HCT116 (cell line): ENCODE measurements at regions of chr1 and their contacts with region 1.

Region 1: GRCh38 chr1:212455803-212456528 is 23.2 kb downstream of the NENF start:
- DNase-seq: peak; percentile 67
- ATAC-seq: peak; percentile 90
- H3K4me3 ChIP-seq: no peak overlapping the region
- H3K27ac ChIP-seq: no peak overlapping the region
- H3K4me1 ChIP-seq: peaks cover 0 to 6% of the 10 kb centered on the region in 2 experiments; a peak in 1 of 4 replicates
- H3K27me3 ChIP-seq: no peaks in the 10 kb centered on the region
- CTCF ChIP-seq: peak; percentile 92 to 98 (median 95)
- POLR2A ChIP-seq: no peak
- RAD21 ChIP-seq: peak; percentile 99

Region 2: GRCh38 chr1:211698161-211699026 is 757.6 kb before region 1 on chr1:
- CTCF ChIA-PET with region 1: interaction called, 21 read pairs
- POLR2A ChIA-PET with region 1: no interaction called
- RAD21 ChIA-PET with region 1: no interaction called
- intact Hi-C with region 1: loop called (anchors 5 kb)
- DNase-seq: peak; percentile 69
- ATAC-seq: peak; percentile 98
- H3K4me3 ChIP-seq: 0 out of 4 replicates have a peak overlapping the region, but pooled peaks of 1 of the 2 experiments have one; percentile 11
- H3K27ac ChIP-seq: no peak overlapping the region
- H3K4me1 ChIP-seq: peaks cover 0 to 12% of the 10 kb centered on the region in 2 experiments; a peak in 2 of 4 replicates
- H3K27me3 ChIP-seq: no peaks in the 10 kb centered on the region
- CTCF ChIP-seq: peak; percentile 99
- POLR2A ChIP-seq: no peak
- RAD21 ChIP-seq: peak; percentile 99

Region 3: DNA sequence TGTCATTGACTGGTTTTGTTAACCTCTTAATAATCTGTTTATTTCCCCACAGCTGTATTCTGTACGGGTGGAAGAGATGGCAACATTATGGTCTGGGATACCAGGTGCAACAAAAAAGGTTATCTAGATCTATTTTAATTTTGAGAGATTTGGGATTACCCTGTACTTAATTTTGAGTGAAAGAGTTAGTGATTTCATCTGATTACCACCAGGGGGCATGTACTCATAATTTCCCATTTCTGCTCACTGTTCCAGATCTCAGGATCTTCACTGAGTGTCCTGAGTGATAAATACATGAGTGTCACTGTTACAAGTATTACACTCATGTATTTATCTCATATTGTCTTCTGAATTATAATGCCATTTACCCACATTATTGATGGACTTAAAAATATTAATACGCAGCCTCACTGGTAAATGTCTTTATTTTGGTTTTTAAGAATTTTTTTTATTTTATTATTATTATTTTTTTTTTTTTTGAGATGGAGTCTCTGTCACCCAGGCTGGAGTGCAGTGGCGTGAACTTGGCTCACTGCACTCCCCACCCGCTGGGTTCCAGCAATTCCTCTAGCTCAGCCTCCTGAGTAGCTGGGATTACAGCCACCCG is 393.0 kb before region 1 on chr1:
- CTCF ChIA-PET with region 1: interaction called, 34 read pairs
- POLR2A ChIA-PET with region 1: no interaction called
- RAD21 ChIA-PET with region 1: interaction called, 5 to 7 read pairs
- intact Hi-C with region 1: loop called (anchors 1 kb)
- DNase-seq: peak; percentile 22
- ATAC-seq: peak; percentile 83
- H3K4me3 ChIP-seq: no peak overlapping the region
- H3K27ac ChIP-seq: no peak overlapping the region
- H3K4me1 ChIP-seq: no peaks in the 10 kb centered on the region
- H3K27me3 ChIP-seq: no peaks in the 10 kb centered on the region
- CTCF ChIP-seq: peak; percentile 58 to 66 (median 60); a peak in 5 of 6 replicates
- POLR2A ChIP-seq: no peak
- RAD21 ChIP-seq: peak; percentile 65

Region 4: DNA sequence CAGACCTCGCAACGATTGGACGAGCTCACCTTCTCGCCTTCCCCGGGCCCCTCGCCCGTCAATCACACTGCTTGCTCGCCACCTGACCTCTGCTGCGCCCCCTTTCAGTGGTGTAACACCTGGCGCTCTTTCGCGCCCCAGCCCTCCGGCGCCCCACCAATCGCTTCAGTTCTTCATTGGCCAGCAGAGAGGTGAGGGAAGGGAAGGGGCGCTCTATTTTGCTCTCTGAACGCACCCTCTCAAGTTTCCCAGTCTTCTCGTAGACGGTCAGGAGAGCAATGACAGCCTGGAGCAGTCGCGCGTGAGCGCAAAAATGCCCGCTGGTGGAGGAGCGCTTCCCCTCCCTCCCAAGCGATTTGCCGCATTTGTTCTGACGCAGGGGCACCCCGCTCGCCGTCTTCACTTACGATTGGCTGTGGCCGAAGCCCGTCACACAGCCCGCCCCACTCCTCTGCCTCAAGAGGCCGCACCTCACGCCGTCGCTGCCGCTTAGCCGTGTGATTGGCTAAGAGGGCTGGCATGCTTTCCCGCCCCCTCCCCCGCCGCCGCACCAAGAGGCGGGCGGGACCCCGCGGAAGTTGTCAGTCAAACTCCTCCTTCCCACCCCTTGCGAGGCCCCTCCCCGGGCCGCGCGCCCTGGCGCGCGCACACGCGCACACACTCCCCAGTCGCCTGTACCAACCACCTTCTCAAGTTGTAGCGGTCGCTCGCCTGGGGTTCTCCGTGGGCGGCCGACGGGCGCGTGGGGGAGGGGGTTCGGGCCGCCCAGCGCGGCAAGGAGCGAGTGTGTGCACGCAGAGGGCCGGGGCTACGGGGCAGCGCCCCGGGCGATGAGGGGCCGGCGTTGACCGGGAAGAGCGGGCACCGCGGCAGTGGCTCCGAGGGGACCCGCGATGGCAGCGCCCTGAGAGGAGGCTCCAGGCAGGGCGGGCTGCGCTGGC is 171.0 kb before region 1 on chr1 and contains the start of gene PPP2R5A:
- CTCF ChIA-PET with region 1: interaction called, 5 read pairs
- POLR2A ChIA-PET with region 1: no interaction called
- RAD21 ChIA-PET with region 1: no interaction called
- intact Hi-C with region 1: loop called (anchors 10 kb)
- DNase-seq: peak; percentile 98
- ATAC-seq: peak; percentile 91
- H3K4me3 ChIP-seq: peak within 1 kb of the TSS; percentile 83 to 86
- H3K27ac ChIP-seq: peak within 1 kb of the TSS; percentile 95
- H3K4me1 ChIP-seq: peaks cover 24 to 28% of the 10 kb centered on the region in 2 experiments; a peak in 3 of 4 replicates
- H3K27me3 ChIP-seq: no peaks in the 10 kb centered on the region
- CTCF ChIP-seq: peak in 1 of 3 experiments; percentile 23; a peak in 1 of 6 replicates
- POLR2A ChIP-seq: peak; percentile 76
- RAD21 ChIP-seq: no peak
- total RNA-seq, gene PPP2R5A: 33.1 TPM

Region 5: GRCh38 chr1:212440419-212440818 is 15.5 kb before region 1 on chr1:
- CTCF ChIA-PET with region 1: interaction called, 18 read pairs
- POLR2A ChIA-PET with region 1: no interaction called
- RAD21 ChIA-PET with region 1: no interaction called
- intact Hi-C with region 1: no loop called
- DNase-seq: no peak
- ATAC-seq: no peak
- H3K4me3 ChIP-seq: no peak overlapping the region
- H3K27ac ChIP-seq: no peak overlapping the region
- H3K4me1 ChIP-seq: peaks cover 14 to 25% of the 10 kb centered on the region in 2 experiments; a peak in 3 of 4 replicates
- H3K27me3 ChIP-seq: no peaks in the 10 kb centered on the region
- CTCF ChIP-seq: no peak
- POLR2A ChIP-seq: no peak
- RAD21 ChIP-seq: no peak

Region 6: DNA sequence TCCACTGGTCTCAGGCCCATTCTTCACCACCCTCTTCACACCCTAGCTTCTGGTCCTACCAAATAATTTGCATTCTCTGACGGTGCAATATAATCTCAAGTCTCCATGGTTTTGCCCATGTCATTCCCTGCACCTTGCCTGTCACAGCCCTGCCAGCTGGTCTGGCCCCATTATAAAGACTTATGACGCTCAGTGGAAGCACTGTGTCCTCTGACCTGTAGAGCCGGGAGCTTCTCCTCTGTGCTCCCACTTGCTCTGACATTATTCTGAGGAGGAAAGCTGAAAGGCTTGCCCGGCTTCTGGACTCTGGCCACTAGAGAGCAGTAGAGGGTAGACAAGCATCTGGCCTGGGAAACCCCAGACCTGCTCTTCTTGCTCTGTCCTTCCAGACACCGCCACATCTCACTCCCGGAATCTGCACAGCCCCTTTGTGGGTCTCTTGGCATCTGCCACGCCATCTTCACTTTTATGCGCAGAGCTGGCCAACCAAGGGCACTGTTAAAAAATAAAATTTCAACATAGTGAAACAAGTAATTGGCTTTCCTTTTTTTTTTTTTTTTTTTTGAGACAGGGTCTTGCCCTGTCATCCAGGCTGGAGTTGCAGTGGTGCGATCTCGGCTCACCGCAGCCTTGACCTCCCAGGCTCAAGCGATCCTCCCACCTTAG is 21.2 kb after region 1 on chr1:
- CTCF ChIA-PET with region 1: interaction called, 24 read pairs
- POLR2A ChIA-PET with region 1: no interaction called
- RAD21 ChIA-PET with region 1: interaction called in 1 of 2 experiments, 3 read pairs
- intact Hi-C with region 1: no loop called
- DNase-seq: peak; percentile 81
- ATAC-seq: peak; percentile 98
- H3K4me3 ChIP-seq: no peak overlapping the region
- H3K27ac ChIP-seq: no peak overlapping the region
- H3K4me1 ChIP-seq: peaks cover 0 to 17% of the 10 kb centered on the region in 2 experiments; a peak in 2 of 4 replicates
- H3K27me3 ChIP-seq: no peaks in the 10 kb centered on the region
- CTCF ChIP-seq: peak; percentile 89 to 96 (median 91)
- POLR2A ChIP-seq: no peak
- RAD21 ChIP-seq: peak; percentile 98

Region 7: GRCh38 chr1:212990276-212990675 is 534.3 kb after region 1 on chr1:
- CTCF ChIA-PET with region 1: interaction called, 5 read pairs
- POLR2A ChIA-PET with region 1: no interaction called
- RAD21 ChIA-PET with region 1: no interaction called
- intact Hi-C with region 1: loop called (anchors 2 kb)
- DNase-seq: no peak
- ATAC-seq: no peak
- H3K4me3 ChIP-seq: no peak overlapping the region
- H3K27ac ChIP-seq: no peak overlapping the region
- H3K4me1 ChIP-seq: peaks cover 0 to 8% of the 10 kb centered on the region in 2 experiments; a peak in 2 of 4 replicates
- H3K27me3 ChIP-seq: no peaks in the 10 kb centered on the region
- CTCF ChIP-seq: no peak
- POLR2A ChIP-seq: no peak
- RAD21 ChIP-seq: no peak